ENCODE measurements at regions of chr3 and their contacts with region 1.

Region 1: DNA sequence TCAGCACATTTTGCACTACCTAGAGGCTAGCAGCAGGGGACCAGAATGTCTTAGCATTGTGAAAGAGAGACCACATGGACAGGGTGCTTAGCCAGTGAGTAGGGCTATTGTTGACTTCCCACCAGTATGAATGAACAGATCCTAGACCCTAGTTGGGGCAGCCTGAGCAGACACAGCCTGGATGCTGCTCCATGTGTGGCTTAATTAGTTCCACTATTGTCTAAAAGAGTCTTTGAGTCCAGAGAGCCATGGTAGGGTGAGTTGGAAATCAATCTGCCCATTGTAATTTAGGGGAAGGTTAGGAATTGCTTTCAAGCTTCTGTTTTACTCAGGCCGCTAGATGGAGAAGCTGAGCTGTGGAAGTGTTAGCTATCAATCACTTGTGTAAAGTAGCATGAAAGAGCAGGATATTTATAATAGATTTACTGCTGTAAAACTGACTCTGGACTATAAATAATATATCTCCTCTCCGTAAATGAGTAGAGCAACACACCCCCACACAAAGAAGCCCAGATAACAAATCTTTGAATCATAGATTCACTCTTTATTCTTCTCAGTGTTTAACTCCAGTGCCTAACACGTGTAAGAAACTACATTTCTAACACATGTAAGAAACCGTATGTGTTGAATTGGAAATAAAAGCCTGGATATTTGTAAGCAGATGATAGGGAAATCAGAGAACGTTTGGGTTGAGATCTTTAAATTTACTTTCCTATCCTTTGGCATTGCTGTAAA is 4.1 kb upstream of the GCSAM start:
- DNase-seq: no peak
- ATAC-seq: no peak
- H3K4me3 Mint-ChIP-seq: peak overlapping the region; percentile 42
- H3K27ac Mint-ChIP-seq: peak overlapping the region; percentile 80
- H3K4me1 Mint-ChIP-seq: peaks cover 63% of the 10 kb centered on the region
- H3K27me3 Mint-ChIP-seq: no peaks in the 10 kb centered on the region
- CTCF ChIP-seq: no peak

Region 2: GRCh38 chr3:110420158-110420641 is 1716.9 kb before region 1 on chr3:
- CTCF ChIA-PET with region 1: no interaction called
- POLR2A ChIA-PET with region 1: no interaction called
- intact Hi-C with region 1: no loop called
- DNase-seq: no peak
- ATAC-seq: no peak
- H3K4me3 Mint-ChIP-seq: no peak overlapping the region
- H3K27ac Mint-ChIP-seq: no peak overlapping the region
- H3K4me1 Mint-ChIP-seq: no peaks in the 10 kb centered on the region
- H3K27me3 Mint-ChIP-seq: no peaks in the 10 kb centered on the region
- CTCF ChIP-seq: no peak

Region 3: GRCh38 chr3:111936191-111936841 is 200.8 kb before region 1 on chr3:
- CTCF ChIA-PET with region 1: no interaction called
- POLR2A ChIA-PET with region 1: no interaction called
- intact Hi-C with region 1: no loop called
- DNase-seq: no peak
- ATAC-seq: no peak
- H3K4me3 Mint-ChIP-seq: no peak overlapping the region
- H3K27ac Mint-ChIP-seq: no peak overlapping the region
- H3K4me1 Mint-ChIP-seq: no peaks in the 10 kb centered on the region
- H3K27me3 Mint-ChIP-seq: no peaks in the 10 kb centered on the region
- CTCF ChIP-seq: no peak

Region 4: DNA sequence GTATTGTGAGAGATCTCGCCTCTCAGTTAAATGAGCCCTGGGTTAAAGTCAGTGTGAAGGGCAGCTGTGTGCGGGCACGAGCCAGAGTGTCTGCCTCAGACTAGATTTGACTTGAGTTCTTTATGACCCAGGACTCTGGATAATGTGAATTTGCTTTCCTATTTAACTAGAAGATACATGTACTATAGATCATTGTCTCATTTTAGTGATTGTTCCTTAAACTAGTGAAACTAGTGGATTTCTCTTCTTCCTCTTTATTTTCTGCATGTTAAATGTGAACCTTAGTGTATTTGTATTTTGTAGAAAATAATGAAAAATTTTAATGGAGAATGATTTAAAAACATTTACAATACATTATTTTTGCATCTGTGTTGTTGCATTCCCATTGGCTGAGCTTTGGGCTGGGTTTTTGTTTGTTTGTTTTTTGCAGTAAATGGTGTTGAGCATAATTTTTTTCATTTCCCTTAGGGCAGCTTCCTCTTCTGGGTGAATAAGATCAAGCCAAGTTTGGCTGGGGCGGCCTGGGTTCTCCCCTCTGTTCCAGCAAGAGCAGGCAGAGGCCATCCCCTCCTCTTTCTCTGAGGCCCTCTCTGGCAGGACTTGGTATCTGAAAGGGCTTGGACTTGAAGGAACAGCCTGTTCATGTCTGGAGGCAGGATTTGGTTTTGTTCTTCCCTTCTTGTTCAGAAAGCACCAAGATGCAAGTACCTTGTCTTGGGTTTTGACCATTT is 19.1 kb before region 1 on chr3:
- CTCF ChIA-PET with region 1: interaction called, 5 read pairs
- POLR2A ChIA-PET with region 1: interaction called, 25 read pairs
- intact Hi-C with region 1: no loop called
- DNase-seq: no peak
- ATAC-seq: peak; percentile 64
- H3K4me3 Mint-ChIP-seq: peak overlapping the region; percentile 15
- H3K27ac Mint-ChIP-seq: peak overlapping the region; percentile 87
- H3K4me1 Mint-ChIP-seq: peaks cover 99% of the 10 kb centered on the region
- H3K27me3 Mint-ChIP-seq: no peaks in the 10 kb centered on the region
- CTCF ChIP-seq: no peak

Region 5: DNA sequence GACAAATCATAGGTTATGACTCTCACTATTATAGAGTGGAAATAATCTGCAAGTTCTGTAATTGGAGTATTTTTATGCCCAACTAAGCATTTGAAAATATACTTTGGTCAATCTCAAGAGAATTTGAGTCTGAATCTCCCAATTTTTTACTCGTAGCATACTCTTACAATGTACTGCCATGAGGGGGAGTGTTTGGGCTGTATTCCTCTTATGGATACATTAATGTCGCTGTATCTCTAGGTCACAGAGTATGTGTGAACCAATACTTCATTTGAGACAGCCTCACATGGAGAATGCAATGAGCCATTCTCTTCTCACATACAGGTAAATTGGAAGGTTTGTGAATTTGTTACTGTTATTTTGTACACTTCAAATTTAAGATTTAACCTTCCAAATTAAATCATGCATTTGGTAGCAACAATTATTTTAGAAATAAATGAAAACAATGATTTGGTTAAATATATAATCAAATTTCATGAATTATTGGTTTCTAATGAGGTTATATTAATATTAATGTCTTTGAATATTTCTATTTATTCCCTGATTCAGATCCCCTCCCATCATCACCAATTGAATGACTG is 190.3 kb after region 1 on chr3:
- CTCF ChIA-PET with region 1: interaction called, 8 read pairs
- POLR2A ChIA-PET with region 1: interaction called, 6 read pairs
- intact Hi-C with region 1: loop called (anchors 1 kb)
- DNase-seq: no peak
- ATAC-seq: peak; percentile 100
- H3K4me3 Mint-ChIP-seq: no peak overlapping the region
- H3K27ac Mint-ChIP-seq: no peak overlapping the region
- H3K4me1 Mint-ChIP-seq: peaks cover 17% of the 10 kb centered on the region
- H3K27me3 Mint-ChIP-seq: no peaks in the 10 kb centered on the region
- CTCF ChIP-seq: no peak

Region 6: DNA sequence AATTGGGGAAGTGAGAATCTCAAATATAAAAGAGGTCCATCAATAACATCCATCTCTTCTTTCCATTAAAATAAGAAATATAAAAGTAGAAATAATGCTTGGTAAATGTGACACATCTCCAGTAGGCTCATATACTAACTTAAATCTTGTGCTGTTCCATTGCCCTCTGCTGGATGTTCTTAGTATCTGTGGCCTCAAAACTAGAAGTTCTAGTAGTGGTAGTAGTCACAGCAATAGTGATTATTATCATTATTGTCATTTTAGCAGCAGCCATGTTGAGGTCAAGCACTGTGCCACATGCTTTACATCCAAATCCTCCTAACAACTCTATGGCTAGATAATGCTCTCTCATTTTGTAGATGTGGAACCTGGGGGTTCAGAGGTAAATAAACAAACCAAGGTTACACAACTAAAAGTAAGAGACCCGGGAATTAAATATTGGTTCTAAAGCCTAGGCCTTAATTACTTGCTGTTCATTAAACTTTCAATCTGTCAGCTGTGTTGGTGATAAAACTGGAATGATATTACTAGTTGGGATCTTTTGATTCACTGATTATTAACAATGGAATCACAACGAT is 382.4 kb after region 1 on chr3:
- CTCF ChIA-PET with region 1: interaction called, 9 read pairs
- POLR2A ChIA-PET with region 1: no interaction called
- intact Hi-C with region 1: loop called (anchors 1 kb)
- DNase-seq: no peak
- ATAC-seq: peak; percentile 75
- H3K4me3 Mint-ChIP-seq: peak overlapping the region; percentile 58
- H3K27ac Mint-ChIP-seq: peak overlapping the region; percentile 89
- H3K4me1 Mint-ChIP-seq: peaks cover 41% of the 10 kb centered on the region
- H3K27me3 Mint-ChIP-seq: no peaks in the 10 kb centered on the region
- CTCF ChIP-seq: no peak

Region 7: GRCh38 chr3:112676659-112677234 is 539.6 kb after region 1 on chr3:
- CTCF ChIA-PET with region 1: no interaction called
- POLR2A ChIA-PET with region 1: no interaction called
- intact Hi-C with region 1: loop called (anchors 5 kb)
- DNase-seq: peak; percentile 57
- ATAC-seq: peak; percentile 98
- H3K4me3 Mint-ChIP-seq: peak overlapping the region; percentile 67
- H3K27ac Mint-ChIP-seq: peak overlapping the region; percentile 84
- H3K4me1 Mint-ChIP-seq: peaks cover 25% of the 10 kb centered on the region
- H3K27me3 Mint-ChIP-seq: peaks cover 8% of the 10 kb centered on the region
- CTCF ChIP-seq: no peak

Region 8: DNA sequence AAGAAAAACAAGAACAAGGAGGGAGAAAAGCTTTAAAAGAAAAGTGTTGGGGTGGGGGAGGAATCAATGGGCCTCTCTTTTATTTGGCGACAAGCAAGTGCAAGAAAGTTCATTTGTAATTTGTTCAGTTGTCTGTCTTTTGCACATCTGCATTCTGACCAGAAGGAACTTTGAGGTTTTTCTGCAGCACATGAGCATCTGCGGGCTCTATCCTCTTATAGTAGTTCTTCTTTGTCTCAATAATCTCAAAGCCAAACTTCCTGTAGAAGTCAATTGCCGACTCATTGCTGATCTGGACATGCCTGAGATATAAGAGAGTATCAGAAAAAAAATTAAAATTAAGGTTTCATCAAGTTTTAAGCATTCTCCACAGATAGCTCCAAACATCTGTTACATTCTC is 1584.5 kb after region 1 on chr3:
- CTCF ChIA-PET with region 1: no interaction called
- POLR2A ChIA-PET with region 1: no interaction called
- intact Hi-C with region 1: no loop called
- DNase-seq: no peak
- ATAC-seq: no peak
- H3K4me3 Mint-ChIP-seq: no peak overlapping the region
- H3K27ac Mint-ChIP-seq: no peak overlapping the region
- H3K4me1 Mint-ChIP-seq: peaks cover 18% of the 10 kb centered on the region
- H3K27me3 Mint-ChIP-seq: no peaks in the 10 kb centered on the region
- CTCF ChIP-seq: no peak